WTC11 (cell line): ENCODE measurements at regions of chr19 and their contacts with region 1.

Region 1: DNA sequence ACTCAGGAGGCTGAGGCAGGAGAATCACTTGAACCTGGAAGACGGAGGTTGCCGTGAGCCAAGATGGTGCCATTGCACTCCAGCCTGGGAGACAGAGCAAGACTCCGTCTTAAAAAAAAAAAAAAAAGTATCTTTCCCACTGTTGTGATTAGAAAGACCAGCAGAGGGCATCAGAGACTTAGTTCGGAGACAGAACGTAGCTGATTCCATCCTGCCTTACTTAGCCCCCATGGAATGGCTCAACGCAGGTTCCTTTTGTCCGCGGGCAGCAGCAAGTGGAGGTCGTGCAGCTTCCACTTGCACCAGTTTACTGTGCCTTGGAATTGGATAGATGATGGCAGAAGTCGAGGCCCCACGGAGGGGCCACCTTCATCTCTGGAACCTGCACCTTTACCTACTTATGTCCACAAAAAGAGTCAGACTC is 8.1 kb downstream of the TIMM29 start:
- DNase-seq: peak; percentile 59
- ATAC-seq: peak; percentile 97
- H3K4me3 Mint-ChIP-seq: peak overlapping the region; percentile 11; the same call in 1 of the 2 replicates
- H3K27ac Mint-ChIP-seq: no peak overlapping the region
- H3K4me1 Mint-ChIP-seq: no peaks in the 10 kb centered on the region; the same call in 1 of the 2 replicates
- H3K27me3 Mint-ChIP-seq: no peaks in the 10 kb centered on the region
- CTCF ChIP-seq: peak; percentile 40

Region 2: DNA sequence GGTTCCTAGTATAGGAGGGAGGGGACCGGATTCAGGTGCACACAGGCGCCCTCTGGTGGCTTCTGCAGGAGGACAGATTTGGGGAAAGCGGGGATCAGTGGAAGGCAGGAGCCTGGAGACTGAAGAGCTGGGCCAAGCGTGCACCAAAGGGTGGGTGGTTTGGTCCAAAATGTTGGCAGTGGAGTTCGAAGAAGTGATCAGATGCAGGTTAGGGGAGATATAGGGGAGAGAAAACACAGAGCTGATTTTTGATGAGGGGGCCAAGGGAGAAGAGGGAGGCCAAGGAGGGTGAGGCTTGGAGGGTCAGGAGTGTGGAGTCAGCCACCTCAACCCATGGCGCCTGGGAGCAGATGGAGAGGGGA is 72.2 kb before region 1 on chr19:
- CTCF ChIA-PET with region 1: interaction called, 15 read pairs
- POLR2A ChIA-PET with region 1: no interaction called
- DNase-seq: peak; percentile 91
- ATAC-seq: peak; percentile 91
- H3K4me3 Mint-ChIP-seq: no peak overlapping the region
- H3K27ac Mint-ChIP-seq: no peak overlapping the region
- H3K4me1 Mint-ChIP-seq: peaks cover 8% of the 10 kb centered on the region
- H3K27me3 Mint-ChIP-seq: no peaks in the 10 kb centered on the region; the same call in 1 of the 2 replicates
- CTCF ChIP-seq: peak; percentile 83

Region 3: DNA sequence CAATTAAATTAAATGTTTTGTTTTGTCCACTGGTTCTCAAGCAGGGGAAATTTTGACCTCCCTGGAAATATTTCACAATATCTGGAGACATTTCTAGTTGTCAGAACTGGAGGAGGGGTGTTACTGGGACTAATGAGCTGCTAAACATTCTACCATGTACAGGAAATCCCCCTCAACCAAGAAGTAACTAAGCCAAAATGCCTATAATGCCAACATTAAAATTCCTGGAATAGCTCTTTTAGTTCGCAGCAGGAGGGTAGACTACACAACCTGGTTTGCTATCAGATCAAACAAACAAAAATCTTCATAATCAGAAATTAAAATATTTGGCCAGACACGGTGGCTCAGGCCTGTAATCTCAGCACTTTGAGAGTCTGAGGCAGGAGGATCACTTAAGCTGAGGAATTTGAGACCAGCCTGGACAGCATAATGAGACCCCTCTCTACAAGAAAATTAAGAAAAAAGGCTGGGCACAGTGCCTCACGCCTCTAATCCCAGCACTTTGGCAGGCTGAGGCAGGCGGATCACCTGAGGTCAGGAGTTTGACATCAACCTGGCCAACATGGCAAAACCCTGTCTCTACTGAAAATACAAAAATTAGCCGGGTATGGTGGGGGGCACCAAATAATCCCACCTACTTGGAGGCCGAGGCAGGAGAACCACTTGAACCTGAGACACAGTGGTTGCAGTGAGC is 10.4 kb after region 1 on chr19:
- CTCF ChIA-PET with region 1: interaction called, 10 read pairs
- POLR2A ChIA-PET with region 1: interaction called, 4 read pairs
- DNase-seq: no peak
- ATAC-seq: no peak
- H3K4me3 Mint-ChIP-seq: no peak overlapping the region
- H3K27ac Mint-ChIP-seq: no peak overlapping the region
- H3K4me1 Mint-ChIP-seq: peaks cover 3% of the 10 kb centered on the region
- H3K27me3 Mint-ChIP-seq: no peaks in the 10 kb centered on the region
- CTCF ChIP-seq: no peak

Region 4: GRCh38 chr19:10968527-10969135 is 32.0 kb after region 1 on chr19:
- CTCF ChIA-PET with region 1: interaction called, 28 read pairs
- POLR2A ChIA-PET with region 1: interaction called, 4 read pairs
- DNase-seq: no peak
- ATAC-seq: no peak
- H3K4me3 Mint-ChIP-seq: no peak overlapping the region
- H3K27ac Mint-ChIP-seq: peak overlapping the region; percentile 31; the same call in 1 of the 2 replicates
- H3K4me1 Mint-ChIP-seq: peaks cover 34% of the 10 kb centered on the region
- H3K27me3 Mint-ChIP-seq: no peaks in the 10 kb centered on the region
- CTCF ChIP-seq: no peak

Region 5: DNA sequence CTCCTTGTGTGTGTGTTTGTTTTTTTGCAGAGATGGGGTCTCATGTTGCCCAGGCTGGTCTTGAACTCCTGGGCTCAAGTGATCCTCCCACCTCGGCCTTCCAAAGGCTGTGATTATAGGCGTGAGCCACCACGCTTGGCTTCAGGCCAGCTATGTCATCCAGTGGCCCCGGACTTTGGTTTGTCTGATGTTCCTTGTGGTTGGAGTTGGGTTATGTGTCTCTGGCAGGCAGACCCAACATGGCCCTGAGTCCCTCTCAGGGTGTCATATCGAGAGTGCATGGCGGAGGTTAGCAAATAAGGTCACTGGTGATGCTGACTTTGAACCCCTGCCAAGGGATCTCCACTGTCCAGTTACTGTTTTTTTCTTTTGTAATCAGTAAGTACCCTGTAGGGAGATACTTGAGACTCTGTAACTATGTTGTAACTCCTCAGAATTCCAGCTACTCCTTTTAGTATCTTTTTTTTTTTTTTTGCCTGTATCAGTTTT is 61.4 kb after region 1 on chr19:
- CTCF ChIA-PET with region 1: interaction called, 11 read pairs
- POLR2A ChIA-PET with region 1: no interaction called
- DNase-seq: no peak
- ATAC-seq: no peak
- H3K4me3 Mint-ChIP-seq: no peak overlapping the region
- H3K27ac Mint-ChIP-seq: peak overlapping the region; percentile 36; the same call in 1 of the 2 replicates
- H3K4me1 Mint-ChIP-seq: no peaks in the 10 kb centered on the region
- H3K27me3 Mint-ChIP-seq: no peaks in the 10 kb centered on the region
- CTCF ChIP-seq: no peak

Region 6: DNA sequence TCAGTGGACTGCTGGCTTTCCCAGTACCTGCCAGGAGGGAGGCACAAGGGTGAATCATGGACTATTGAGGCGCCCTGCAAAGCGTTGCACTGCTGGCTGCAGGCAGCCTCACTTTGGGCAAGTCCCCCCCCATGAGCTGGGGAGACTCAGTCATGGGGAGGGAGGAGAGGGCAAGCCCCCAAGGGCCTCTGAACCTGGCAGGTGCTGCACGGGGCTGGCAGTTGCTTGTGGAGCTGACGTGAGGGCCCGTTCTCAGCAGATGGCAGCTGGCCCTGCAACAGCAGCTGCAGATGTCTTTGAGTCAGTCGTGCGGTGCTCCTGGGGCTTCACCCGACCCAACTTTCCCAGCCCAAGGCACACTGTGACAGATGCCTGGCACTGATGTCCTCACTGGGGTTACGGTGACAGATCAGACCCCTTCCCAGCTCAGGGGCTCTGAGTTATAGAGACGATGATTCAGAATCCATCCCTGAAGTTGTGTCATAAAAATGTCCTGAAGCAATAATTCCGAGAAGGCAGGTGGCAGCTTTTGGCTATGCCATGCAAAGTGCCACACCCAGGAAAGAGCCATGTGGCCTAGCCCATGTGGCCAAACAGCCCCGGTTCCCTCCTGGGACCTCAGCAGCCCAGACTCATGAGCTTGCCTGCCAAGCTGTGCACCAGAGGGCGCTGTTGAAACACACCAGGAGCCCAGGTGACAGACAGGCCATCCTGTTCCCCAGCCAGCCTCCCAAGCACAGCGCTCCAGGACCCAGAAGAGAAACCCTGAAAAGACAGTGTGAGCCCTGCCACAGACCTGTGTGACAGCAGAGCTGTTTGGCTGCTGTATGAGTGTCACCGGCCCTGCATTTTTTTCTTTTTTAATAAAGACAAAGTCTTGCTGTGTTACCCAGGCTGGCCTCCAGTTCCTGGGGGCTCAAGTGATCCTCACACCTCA is 99.0 kb after region 1 on chr19:
- CTCF ChIA-PET with region 1: interaction called, 19 read pairs
- POLR2A ChIA-PET with region 1: no interaction called
- DNase-seq: peak; percentile 95
- ATAC-seq: peak; percentile 97
- H3K4me3 Mint-ChIP-seq: no peak overlapping the region
- H3K27ac Mint-ChIP-seq: peak overlapping the region; percentile 53
- H3K4me1 Mint-ChIP-seq: no peaks in the 10 kb centered on the region
- H3K27me3 Mint-ChIP-seq: no peaks in the 10 kb centered on the region
- CTCF ChIP-seq: peak; percentile 86

Region 7: DNA sequence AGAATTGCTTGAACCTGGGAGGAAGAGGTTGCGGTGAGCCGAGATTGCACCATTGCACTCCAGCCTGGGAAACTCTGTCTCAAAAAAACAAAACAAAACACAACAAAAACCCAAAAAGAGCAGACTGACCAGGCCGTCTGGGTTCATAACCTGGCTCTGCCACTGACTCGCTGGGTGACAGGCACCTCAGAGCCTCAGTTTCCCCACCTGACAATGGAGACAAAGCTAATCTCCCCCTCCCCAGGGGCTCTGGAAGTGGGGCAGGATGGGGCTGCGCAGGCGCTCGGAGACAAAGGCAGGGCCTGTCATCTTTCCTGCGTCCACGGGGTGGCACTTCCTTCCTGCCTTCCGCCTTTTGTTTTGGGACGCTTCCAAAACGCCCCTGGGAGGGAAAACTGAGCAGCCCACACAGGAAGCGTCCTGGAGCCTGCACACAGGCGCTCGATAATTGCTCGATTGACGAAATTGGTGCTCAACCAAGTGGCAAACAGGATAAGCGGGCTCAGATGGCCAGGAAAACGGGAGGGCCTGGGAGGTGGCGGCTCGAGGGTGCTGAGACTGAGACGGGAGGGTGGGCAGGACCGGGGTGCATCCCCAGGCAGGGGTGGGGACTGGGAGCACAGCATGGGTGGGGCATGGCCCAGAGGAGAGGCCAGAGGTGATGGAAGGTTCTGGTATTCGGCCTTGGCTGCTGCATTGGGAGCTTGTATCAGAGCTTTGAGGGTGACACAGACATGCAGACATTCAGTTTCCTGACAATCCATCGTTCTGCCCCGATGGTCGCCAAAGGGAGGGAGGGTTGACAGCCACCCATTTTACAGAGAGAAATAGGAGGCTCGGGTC is 201.1 kb after region 1 on chr19:
- CTCF ChIA-PET with region 1: interaction called, 11 read pairs
- POLR2A ChIA-PET with region 1: no interaction called
- DNase-seq: peak; percentile 77
- ATAC-seq: peak; percentile 60
- H3K4me3 Mint-ChIP-seq: peak overlapping the region; percentile 77
- H3K27ac Mint-ChIP-seq: peak overlapping the region; percentile 82
- H3K4me1 Mint-ChIP-seq: peaks cover 16% of the 10 kb centered on the region
- H3K27me3 Mint-ChIP-seq: no peaks in the 10 kb centered on the region; the same call in 1 of the 2 replicates
- CTCF ChIP-seq: no peak

Region 8: DNA sequence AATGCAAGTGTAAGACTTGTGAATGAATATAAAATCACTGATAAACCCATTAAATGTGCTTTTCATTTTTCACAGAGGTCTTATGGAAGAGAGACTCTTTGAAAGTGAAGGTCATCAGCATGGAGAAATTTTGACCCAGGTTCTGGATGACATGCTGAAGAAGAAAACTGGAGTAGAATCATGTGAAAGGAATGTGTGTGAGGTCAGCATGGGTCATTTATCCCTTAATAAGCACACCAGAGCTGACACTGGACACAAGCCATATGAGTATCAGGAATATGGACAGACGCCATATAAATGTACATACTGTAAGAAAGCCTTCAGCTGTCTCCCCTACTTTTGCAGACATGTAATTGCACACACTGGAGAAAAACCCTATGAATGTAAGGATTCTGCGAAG is 1174.5 kb after region 1 on chr19:
- CTCF ChIA-PET with region 1: no interaction called
- POLR2A ChIA-PET with region 1: no interaction called
- DNase-seq: no peak
- ATAC-seq: no peak
- H3K4me3 Mint-ChIP-seq: no peak overlapping the region
- H3K27ac Mint-ChIP-seq: no peak overlapping the region
- H3K4me1 Mint-ChIP-seq: no peaks in the 10 kb centered on the region
- H3K27me3 Mint-ChIP-seq: peaks cover 5% of the 10 kb centered on the region; the same call in 1 of the 2 replicates
- CTCF ChIP-seq: no peak